ENCODE measurements at regions of chr1 and their contacts with region 1.

Region 1: GRCh38 chr1:32266921-32267591 is 16.0 kb downstream of the LCK start:
- DNase-seq: peak in 1 of 9 experiments; percentile 60
- ATAC-seq: peak; percentile 18
- H3K4me3 ChIP-seq: peak overlapping the region in 1 of 2 experiments; percentile 20
- H3K4me3 Mint-ChIP-seq: peak overlapping the region; percentile 76
- H3K27ac ChIP-seq: peak overlapping the region; percentile 50 to 54
- H3K27ac Mint-ChIP-seq: peak overlapping the region; percentile 98
- H3K4me1 ChIP-seq: peaks cover 71% of the 10 kb centered on the region
- H3K4me1 Mint-ChIP-seq: peaks cover 61% of the 10 kb centered on the region
- H3K27me3 ChIP-seq: no peaks in the 10 kb centered on the region
- H3K27me3 Mint-ChIP-seq: no peaks in the 10 kb centered on the region
- CTCF ChIP-seq: no peak

Region 2: GRCh38 chr1:32255072-32256071 is 11.7 kb before region 1 on chr1:
- CTCF ChIA-PET with region 1: interaction called, 74 read pairs
- POLR2A ChIA-PET with region 1: interaction called, 206 read pairs
- intact Hi-C with region 1: loop called in 1 of 2 experiments (anchors 1 kb)
- DNase-seq: peak in 3 of 9 experiments; percentile 34 to 58 (median 35)
- ATAC-seq: peak; percentile 13
- H3K4me3 ChIP-seq: peak overlapping the region; percentile 45 to 84
- H3K4me3 Mint-ChIP-seq: peak overlapping the region; percentile 87
- H3K27ac ChIP-seq: peak overlapping the region; percentile 38 to 93
- H3K27ac Mint-ChIP-seq: peak overlapping the region; percentile 99
- H3K4me1 ChIP-seq: peaks cover 44% of the 10 kb centered on the region
- H3K4me1 Mint-ChIP-seq: peaks cover 55% of the 10 kb centered on the region
- H3K27me3 ChIP-seq: no peaks in the 10 kb centered on the region
- H3K27me3 Mint-ChIP-seq: no peaks in the 10 kb centered on the region
- CTCF ChIP-seq: no peak

Measured in CD8-positive, alpha-beta T cell (primary cell).